ENCODE measurements at regions of chr15 and their contacts with region 1.

Region 1: DNA sequence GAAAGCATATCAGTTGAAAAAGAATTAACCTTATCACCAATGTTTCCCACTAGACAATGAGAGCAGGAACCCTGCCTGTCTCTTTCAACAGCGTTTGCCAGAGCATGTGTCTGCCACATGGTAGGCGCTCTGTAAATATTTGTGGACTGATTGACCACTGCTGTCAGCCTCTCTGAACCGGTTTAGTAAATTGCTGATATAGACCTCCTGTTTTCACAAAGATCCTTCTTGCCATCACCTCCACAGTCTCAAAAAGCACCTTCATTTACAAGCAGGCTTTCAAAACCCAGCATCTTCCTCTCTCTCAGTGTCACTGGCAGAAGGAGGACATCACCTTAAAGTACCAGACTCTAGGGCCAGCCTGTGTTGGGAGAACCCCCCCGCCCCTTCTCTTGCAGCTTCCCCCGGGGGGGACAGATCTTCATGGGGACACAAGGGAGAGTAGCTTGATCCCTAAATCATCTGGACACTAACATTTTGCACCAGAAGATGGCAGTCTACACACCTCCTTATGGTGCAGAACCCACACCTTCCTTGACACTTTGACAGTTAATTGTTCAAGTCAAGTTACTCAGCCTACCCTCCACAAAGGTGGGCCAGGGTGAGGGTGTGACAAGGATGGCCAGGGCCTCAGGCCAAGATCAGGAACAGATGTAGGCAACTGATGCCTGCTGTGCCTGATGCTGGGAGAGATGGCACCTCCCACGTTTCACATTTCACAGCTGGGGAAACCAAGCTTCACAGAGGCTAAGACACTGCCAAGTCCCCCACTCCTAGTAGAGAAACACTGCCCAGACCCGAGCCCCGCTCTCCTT is 37.8 kb upstream of the USP3 start:
- DNase-seq: peak; percentile 68
- ATAC-seq: peak; percentile 94
- H3K4me3 Mint-ChIP-seq: no peak overlapping the region
- H3K27ac Mint-ChIP-seq: no peak overlapping the region
- H3K4me1 Mint-ChIP-seq: peaks cover 16% of the 10 kb centered on the region
- H3K27me3 Mint-ChIP-seq: peaks cover 3% of the 10 kb centered on the region

Region 2: GRCh38 chr15:63452552-63453136 is 13.9 kb before region 1 on chr15:
- CTCF ChIA-PET with region 1: interaction called, 10 read pairs
- DNase-seq: no peak
- ATAC-seq: no peak
- H3K4me3 Mint-ChIP-seq: no peak overlapping the region
- H3K27ac Mint-ChIP-seq: no peak overlapping the region
- H3K4me1 Mint-ChIP-seq: peaks cover 7% of the 10 kb centered on the region
- H3K27me3 Mint-ChIP-seq: peaks cover 5% of the 10 kb centered on the region

Region 3: DNA sequence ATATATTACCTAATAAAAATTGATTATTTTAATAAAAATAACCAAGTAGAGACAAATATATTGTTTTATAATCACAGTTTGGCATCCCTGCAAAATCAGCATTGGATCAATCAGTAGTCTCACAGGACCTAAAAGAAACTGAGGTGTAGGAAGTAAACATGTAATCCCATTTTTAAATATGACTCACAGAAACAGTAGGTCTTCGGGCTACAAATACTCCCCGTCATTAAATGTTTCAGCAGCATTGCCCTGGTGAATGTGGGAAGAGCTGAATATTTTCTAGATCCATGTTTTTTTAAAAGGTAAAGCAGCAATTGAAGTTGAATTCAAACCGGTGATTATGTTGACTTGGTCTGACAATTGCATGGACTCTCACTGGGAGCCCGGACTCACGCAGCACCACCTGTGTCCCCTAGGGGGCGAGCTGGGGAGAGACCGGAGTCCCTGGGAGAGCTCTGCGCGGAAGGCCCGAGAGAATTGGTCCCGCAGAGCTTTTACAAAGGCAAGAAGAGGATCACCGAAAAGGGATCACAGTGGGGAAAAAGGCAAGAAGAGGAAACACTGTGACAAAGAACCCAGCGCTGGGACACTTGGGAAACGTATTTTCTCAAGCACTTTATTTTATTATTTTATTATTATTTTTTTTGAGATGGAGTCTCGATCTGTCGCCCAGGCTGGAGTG is 20.6 kb after region 1 on chr15:
- CTCF ChIA-PET with region 1: interaction called, 22 read pairs
- DNase-seq: peak; percentile 94
- ATAC-seq: peak; percentile 96
- H3K4me3 Mint-ChIP-seq: peak overlapping the region; percentile 53
- H3K27ac Mint-ChIP-seq: peak overlapping the region; percentile 70
- H3K4me1 Mint-ChIP-seq: peaks cover 51% of the 10 kb centered on the region
- H3K27me3 Mint-ChIP-seq: peaks cover 7% of the 10 kb centered on the region

Region 4: DNA sequence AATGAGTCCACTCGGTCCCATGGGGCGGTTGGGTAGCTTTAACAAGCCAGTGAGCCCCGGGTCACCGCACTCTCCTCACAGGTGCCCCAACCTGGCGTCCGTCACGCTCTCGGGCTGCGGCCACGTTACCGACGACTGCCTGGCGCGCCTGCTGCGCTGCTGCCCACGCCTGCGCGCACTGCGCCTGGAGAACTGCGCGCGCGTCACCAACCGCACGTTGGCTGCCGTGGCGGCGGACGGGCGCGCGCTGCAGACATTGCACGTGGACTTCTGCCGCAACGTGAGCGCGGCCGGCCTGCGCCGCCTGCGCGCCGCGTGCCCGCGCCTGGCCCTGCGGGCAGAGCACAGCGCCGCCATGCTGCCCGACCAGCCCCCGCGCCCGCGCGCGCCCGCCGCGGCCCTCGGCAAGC is 134.0 kb after region 1 on chr15:
- CTCF ChIA-PET with region 1: interaction called, 65 read pairs
- DNase-seq: peak; percentile 91
- ATAC-seq: peak; percentile 83
- H3K4me3 Mint-ChIP-seq: peak overlapping the region; percentile 91
- H3K27ac Mint-ChIP-seq: peak overlapping the region; percentile 93
- H3K4me1 Mint-ChIP-seq: peaks cover 42% of the 10 kb centered on the region
- H3K27me3 Mint-ChIP-seq: peaks cover 3% of the 10 kb centered on the region